ENCODE measurements at regions of chr11 and their contacts with region 1.

Region 1: DNA sequence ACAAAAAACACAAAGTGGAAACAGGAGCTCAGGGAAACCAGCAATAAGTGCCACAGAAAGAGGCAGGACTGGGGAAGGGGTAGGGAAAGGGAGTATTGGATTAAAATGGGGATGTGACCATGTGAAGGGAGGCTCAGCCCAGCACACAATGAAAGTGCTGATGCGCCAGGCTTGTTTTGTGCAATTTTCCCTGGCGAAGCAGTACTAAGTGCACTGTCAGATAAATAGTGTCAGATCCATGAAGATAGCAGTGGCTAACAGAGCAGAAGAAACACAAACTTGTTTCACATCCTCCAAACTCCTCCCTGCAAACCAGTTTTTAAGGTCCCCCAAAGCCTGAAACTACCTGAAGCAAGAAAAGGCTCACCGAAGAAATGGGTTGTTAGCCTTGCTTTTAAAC is 50.7 kb upstream of the RAPSN start:
- H3K4me3 Mint-ChIP-seq: no peak overlapping the region
- H3K27ac Mint-ChIP-seq: no peak overlapping the region
- H3K4me1 Mint-ChIP-seq: peaks cover 49% of the 10 kb centered on the region
- H3K27me3 Mint-ChIP-seq: no peaks in the 10 kb centered on the region

Region 2: DNA sequence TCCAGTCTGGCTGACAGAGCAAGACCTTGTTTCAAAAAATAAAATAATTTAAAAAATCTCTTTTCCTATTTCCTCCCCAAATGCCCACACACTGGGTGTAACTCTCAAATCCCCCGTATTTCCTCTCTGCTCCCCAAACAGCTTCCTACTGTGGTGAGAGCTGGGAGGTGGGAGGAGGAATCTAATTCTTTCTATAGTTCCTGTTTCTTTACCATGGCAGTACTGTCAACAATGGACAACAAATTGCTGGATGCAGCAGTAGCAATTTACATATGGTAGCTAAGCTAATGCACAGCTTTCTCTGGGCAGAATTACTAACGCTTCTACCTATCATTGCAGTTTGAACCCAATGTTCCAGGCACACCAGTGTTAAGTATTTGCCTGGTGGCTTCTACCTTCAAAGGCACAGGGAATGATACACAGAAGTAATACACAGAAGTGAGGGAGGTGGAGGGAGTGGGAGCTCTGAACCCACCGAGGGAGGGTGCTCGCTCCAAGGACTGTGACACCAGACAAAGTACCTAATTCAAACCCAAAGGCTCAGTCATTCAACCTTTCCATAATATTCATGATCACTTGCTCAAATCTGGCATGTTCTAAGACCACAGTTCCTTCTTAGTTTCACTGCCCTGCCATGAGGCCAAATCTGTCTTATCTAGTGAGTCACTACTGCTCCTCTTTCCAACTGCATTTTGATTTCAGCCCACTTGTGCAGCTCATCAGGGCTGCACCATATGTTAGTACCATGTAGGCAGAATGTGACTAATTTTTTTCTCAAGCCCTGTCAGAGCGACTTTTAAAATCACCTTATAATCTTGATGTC is 15.4 kb after region 1 on chr11:
- intact Hi-C with region 1: loop called (anchors 2 kb)
- H3K4me3 Mint-ChIP-seq: peak overlapping the region; percentile 50
- H3K27ac Mint-ChIP-seq: peak overlapping the region; percentile 75
- H3K4me1 Mint-ChIP-seq: peaks cover 74% of the 10 kb centered on the region
- H3K27me3 Mint-ChIP-seq: no peaks in the 10 kb centered on the region

Region 3: GRCh38 chr11:47532597-47533213 is 33.1 kb after region 1 on chr11:
- intact Hi-C with region 1: loop called (anchors 5 kb)
- H3K4me3 Mint-ChIP-seq: no peak overlapping the region
- H3K27ac Mint-ChIP-seq: peak overlapping the region; percentile 62
- H3K4me1 Mint-ChIP-seq: peaks cover 44% of the 10 kb centered on the region
- H3K27me3 Mint-ChIP-seq: no peaks in the 10 kb centered on the region

Measured in dendritic cell treated with granulocyte-macrophage colony-stimulating factor and Interleukin-4, amounts not matched to agents 40 ng/mL and 50 ng/mL, for 4 days (primary cell).